ENCODE measurements at regions of chr1 and their contacts with region 1.

Region 1: DNA sequence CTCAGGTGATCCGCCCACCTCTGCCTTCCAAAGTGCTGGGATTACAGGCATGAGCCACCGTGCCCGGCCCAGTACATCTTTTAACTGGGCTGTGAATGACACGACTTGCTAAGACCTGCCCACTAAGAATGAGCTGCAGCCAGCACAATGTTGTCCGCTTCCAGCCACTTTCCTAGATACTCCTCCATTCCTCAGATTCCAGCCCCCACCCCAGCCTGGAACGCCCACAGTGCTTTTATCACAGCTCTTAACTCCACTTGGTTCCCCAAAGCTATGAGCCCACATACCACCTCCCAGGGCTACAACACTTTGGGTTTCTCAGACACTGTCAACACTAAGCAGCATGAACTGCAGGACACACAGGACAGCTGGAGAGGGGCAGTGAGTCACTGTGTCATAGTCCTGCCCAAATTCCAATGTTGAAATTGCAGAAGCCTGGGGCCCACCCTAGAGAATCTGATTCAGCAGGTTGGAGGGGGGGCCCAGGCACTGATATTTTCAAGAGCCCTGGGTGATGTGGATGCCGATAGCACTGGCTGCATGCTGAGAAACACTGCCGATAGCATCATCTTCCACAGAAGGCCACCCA is 58.0 kb downstream of the ACBD3 start:
- DNase-seq: no peak
- H3K4me3 ChIP-seq: no peak overlapping the region
- CTCF ChIP-seq: no peak

Region 2: GRCh38 chr1:226195144-226195543 is 66.6 kb after region 1 on chr1:
- CTCF ChIA-PET with region 1: interaction called, 282 read pairs
- POLR2A ChIA-PET with region 1: interaction called, 3 read pairs
- DNase-seq: no peak
- H3K4me3 ChIP-seq: no peak overlapping the region
- CTCF ChIP-seq: no peak

Region 3: GRCh38 chr1:226466296-226466695 is 337.7 kb after region 1 on chr1:
- CTCF ChIA-PET with region 1: no interaction called
- POLR2A ChIA-PET with region 1: no interaction called
- DNase-seq: no peak
- H3K4me3 ChIP-seq: no peak overlapping the region
- CTCF ChIP-seq: no peak

Measured in AG04449 (cell line).